B cell (primary cell): ENCODE measurements at regions of chr16 and their contacts with region 1.

Region 1: DNA sequence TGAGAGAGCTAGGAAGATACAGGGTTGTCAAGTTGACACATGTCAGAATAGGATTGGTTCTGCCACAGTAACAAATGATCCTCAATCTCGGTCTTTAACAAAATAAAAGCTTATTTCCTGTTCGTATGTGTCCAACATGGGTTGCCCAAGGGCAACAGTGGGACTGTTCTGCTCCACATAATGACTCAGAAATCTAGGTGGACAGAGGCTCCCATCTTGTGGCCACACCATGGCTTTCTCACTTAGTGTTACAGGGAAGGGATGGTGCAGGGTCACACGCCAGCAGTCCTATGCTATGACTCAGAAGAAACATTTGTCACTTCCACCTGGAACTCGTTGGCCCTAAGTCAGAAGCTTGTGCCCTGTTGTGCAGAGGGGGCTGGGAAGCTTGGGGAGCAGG is 364.9 kb downstream of the SNX29 start:
- DNase-seq: no peak
- ATAC-seq: no peak
- H3K4me3 ChIP-seq: no peak overlapping the region
- H3K4me3 Mint-ChIP-seq: no peak overlapping the region
- H3K27ac ChIP-seq: no peak overlapping the region
- H3K27ac Mint-ChIP-seq: no peak overlapping the region
- H3K4me1 ChIP-seq: no peaks in the 10 kb centered on the region
- H3K4me1 Mint-ChIP-seq: peaks cover 20% of the 10 kb centered on the region
- H3K27me3 ChIP-seq: no peaks in the 10 kb centered on the region
- H3K27me3 Mint-ChIP-seq: no peaks in the 10 kb centered on the region
- CTCF ChIP-seq: no peak

Region 2: GRCh38 chr16:11909653-11910545 is 431.5 kb before region 1 on chr16:
- CTCF ChIA-PET with region 1: no interaction called
- POLR2A ChIA-PET with region 1: no interaction called
- intact Hi-C with region 1: no loop called
- DNase-seq: no peak
- ATAC-seq: no peak
- H3K4me3 ChIP-seq: no peak overlapping the region
- H3K4me3 Mint-ChIP-seq: peak overlapping the region; percentile 12
- H3K27ac ChIP-seq: no peak overlapping the region
- H3K27ac Mint-ChIP-seq: peak overlapping the region; percentile 21
- H3K4me1 ChIP-seq: peaks cover 28 to 38% of the 10 kb centered on the region in 2 donors
- H3K4me1 Mint-ChIP-seq: peaks cover 56% of the 10 kb centered on the region
- H3K27me3 ChIP-seq: no peaks in the 10 kb centered on the region
- H3K27me3 Mint-ChIP-seq: no peaks in the 10 kb centered on the region
- CTCF ChIP-seq: no peak

Region 3: DNA sequence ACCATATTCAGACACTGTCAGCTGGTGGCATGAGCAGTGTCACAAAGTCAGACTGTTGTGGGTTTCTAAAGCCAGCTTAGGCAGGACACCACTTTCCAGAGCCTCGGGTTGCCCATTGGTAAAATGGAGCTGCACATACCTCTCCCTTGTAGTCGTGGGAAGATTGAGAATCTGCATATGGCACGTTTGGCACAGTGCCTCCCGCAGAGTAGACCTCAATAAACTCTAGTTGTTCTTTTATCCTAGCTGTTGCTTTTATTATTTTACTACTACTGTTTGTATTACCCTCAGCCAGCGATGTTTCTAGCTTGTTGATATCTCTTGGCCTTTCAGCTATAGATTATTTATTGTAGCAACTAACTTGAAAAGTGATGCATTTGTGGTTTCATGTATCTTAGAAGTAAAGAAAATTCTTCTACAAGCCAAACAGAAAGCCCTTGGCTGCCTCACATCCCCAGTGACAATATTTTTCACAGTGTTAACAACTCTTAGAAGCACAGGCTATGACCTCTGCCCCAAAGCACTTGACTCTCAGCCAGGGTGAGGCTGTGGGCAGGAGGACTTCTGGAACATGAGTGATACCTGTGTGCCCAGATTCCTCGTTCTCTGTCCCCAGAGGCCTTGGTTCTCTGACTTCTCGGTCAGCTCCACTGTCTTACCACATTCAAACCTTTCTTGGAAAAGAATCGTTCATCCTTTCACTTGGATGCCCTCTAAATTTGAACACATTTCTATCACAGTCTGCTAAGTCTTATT is 13.3 kb before region 1 on chr16:
- CTCF ChIA-PET with region 1: interaction called, 10 read pairs
- POLR2A ChIA-PET with region 1: no interaction called
- intact Hi-C with region 1: no loop called
- DNase-seq: no peak
- ATAC-seq: no peak
- H3K4me3 ChIP-seq: no peak overlapping the region
- H3K4me3 Mint-ChIP-seq: no peak overlapping the region
- H3K27ac ChIP-seq: no peak overlapping the region
- H3K27ac Mint-ChIP-seq: no peak overlapping the region
- H3K4me1 ChIP-seq: peaks cover 9 to 21% of the 10 kb centered on the region in 2 donors
- H3K4me1 Mint-ChIP-seq: peaks cover 57% of the 10 kb centered on the region
- H3K27me3 ChIP-seq: no peaks in the 10 kb centered on the region
- H3K27me3 Mint-ChIP-seq: no peaks in the 10 kb centered on the region
- CTCF ChIP-seq: no peak